CD8-positive, alpha-beta T cell (primary cell): ENCODE measurements at regions of chr11 and their contacts with region 1.

Region 1: DNA sequence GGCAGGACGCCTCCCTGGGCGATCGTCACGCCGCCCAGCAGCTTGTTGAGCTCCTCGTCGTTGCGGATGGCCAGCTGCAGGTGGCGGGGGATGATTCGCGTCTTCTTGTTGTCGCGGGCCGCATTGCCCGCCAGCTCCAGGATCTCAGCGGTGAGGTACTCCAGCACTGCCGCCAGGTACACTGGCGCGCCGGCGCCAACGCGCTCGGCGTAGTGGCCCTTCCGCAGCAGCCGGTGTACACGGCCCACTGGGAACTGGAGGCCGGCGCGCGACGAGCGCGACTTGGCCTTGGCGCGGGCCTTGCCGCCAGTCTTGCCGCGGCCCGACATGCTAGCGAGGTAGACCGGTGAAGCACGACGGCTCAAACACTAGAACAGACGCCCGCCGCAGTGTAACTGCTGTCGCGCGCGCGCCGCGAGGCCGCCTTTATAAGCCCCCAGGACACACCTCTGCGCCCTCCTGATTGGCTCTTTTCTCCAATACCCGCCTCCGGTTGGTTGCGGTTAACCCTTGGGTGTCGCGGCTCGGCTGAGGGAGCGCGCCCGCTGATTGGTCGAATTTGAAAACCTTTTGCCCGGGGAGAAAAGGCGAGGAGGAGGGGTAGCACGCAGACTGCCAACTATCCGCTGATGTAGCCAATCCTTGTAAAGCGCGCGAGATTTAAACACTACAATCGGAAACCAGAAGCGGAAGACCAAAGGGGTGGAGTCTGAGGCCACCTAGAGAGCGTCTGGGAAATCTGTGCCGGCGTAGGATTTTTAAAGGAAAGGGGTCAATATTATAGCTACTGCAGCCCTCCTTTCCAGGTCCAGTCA is 6.4 kb downstream of the DPAGT1 start:
- DNase-seq: peak; percentile 98 to 100 (median 99)
- ATAC-seq: peak; percentile 86
- H3K4me3 ChIP-seq: peak overlapping the region; percentile 78 to 88
- H3K4me3 Mint-ChIP-seq: peak overlapping the region; percentile 93
- H3K27ac ChIP-seq: peak overlapping the region; percentile 75 to 78
- H3K27ac Mint-ChIP-seq: peak overlapping the region; percentile 91
- H3K4me1 ChIP-seq: peaks cover 23% of the 10 kb centered on the region
- H3K4me1 Mint-ChIP-seq: peaks cover 34% of the 10 kb centered on the region
- H3K27me3 ChIP-seq: no peaks in the 10 kb centered on the region
- H3K27me3 Mint-ChIP-seq: no peaks in the 10 kb centered on the region
- CTCF ChIP-seq: no peak

Region 2: DNA sequence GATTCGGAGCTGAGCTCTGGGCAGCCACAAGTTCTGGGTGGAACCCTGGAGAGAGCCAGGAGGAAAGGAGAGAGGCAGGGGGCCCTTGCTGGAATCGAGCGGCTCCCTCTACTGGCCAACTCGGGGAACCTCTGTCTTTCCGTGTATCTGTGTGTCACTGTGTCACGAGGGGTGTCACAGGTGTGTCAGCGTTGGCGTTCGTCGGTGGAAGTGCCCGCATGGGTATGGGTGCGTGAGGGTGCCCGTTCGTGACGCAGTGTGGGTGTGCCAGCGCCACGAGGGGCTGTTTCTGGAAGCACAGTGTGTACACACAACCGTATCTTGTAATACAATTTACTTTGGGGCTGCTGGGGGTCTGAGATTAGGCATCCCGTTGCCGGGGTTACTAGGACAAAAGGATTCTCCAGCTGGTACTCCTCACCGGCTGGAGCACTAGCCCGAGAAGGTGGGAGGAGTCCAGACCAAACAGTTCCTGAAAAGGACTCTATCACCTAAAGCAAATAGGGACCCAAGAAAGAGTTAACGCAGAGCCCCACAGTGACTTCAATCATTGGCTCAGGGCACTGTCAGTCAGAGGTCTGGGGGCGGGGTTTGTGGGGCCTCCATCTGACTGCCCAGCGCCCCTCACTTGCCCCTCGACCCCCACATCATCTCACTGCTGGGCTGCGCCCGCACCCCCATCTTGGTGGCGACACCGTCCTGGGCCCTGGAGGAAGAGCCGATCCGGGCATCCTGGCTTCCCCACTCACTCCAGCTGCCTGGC is 167.0 kb before region 1 on chr11:
- CTCF ChIA-PET with region 1: interaction called, 3 read pairs
- POLR2A ChIA-PET with region 1: no interaction called
- intact Hi-C with region 1: loop called in 1 of 2 experiments (anchors 2 kb)
- DNase-seq: peak; percentile 87 to 100 (median 94)
- ATAC-seq: peak; percentile 58
- H3K4me3 ChIP-seq: peak overlapping the region; percentile 74 to 85
- H3K4me3 Mint-ChIP-seq: peak overlapping the region; percentile 96
- H3K27ac ChIP-seq: peak overlapping the region; percentile 88 to 97
- H3K27ac Mint-ChIP-seq: peak overlapping the region; percentile 98
- H3K4me1 ChIP-seq: peaks cover 29% of the 10 kb centered on the region
- H3K4me1 Mint-ChIP-seq: peaks cover 44% of the 10 kb centered on the region
- H3K27me3 ChIP-seq: no peaks in the 10 kb centered on the region
- H3K27me3 Mint-ChIP-seq: no peaks in the 10 kb centered on the region
- CTCF ChIP-seq: peak; percentile 79

Region 3: DNA sequence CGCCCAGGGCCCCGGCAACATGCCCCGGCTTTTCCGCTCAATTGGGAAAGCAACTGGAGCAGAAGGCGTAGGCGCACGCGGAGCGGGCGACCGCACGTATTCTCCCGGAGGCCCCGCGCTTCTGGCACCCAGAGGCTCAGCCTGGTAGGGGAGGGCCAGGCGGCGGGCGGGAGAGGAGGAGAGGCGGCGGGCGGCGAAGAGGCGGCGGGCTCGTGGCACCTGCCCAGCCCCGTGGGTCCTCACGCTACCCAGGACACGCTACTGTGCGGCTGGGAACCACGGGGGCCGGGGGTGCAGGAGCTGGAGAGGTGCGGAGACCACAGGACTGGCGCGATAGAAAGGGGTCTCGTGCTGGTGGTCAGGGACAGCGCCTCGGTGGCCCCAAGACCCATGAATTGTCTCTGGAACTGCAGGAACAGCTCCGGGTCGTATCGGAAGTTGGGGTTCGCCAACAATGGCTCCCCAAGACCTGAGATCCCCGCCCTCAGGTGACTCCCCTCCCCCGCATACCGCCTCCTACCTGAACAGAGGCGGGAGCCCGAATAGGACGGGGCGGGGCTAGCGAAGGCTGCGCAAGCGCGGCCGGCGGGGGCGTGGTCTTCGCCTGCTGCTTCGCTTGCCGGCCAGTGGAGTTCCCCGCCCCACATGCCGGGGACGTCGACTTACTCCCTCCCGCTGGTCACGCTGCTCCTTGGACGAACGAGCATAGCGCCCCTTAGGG is 64.8 kb before region 1 on chr11 and contains the start of gene SLC37A4:
- CTCF ChIA-PET with region 1: no interaction called
- POLR2A ChIA-PET with region 1: no interaction called
- intact Hi-C with region 1: loop called in 1 of 2 experiments (anchors 2 kb)
- DNase-seq: peak; percentile 97 to 100 (median 99)
- ATAC-seq: peak; percentile 93
- H3K4me3 ChIP-seq: peak within 1 kb of the TSS; percentile 94 to 99
- H3K4me3 Mint-ChIP-seq: peak within 1 kb of the TSS; percentile 89
- H3K27ac ChIP-seq: peak within 1 kb of the TSS; percentile 65 to 71
- H3K27ac Mint-ChIP-seq: peak within 1 kb of the TSS; percentile 88
- H3K4me1 ChIP-seq: peaks cover 13% of the 10 kb centered on the region
- H3K4me1 Mint-ChIP-seq: peaks cover 18% of the 10 kb centered on the region
- H3K27me3 ChIP-seq: no peaks in the 10 kb centered on the region
- H3K27me3 Mint-ChIP-seq: no peaks in the 10 kb centered on the region
- CTCF ChIP-seq: peak; percentile 34
- total RNA-seq, gene SLC37A4: 4.0 to 4.6 TPM

Region 4: GRCh38 chr11:119084663-119085436 is 10.4 kb before region 1 on chr11 and contains the start of gene HMBS:
- CTCF ChIA-PET with region 1: interaction called, 6 read pairs
- POLR2A ChIA-PET with region 1: interaction called, 27 read pairs
- intact Hi-C with region 1: loop called in 1 of 2 experiments (anchors 1 kb)
- DNase-seq: peak; percentile 78 to 97 (median 92)
- ATAC-seq: peak; percentile 93
- H3K4me3 ChIP-seq: peak within 1 kb of the TSS; percentile 92
- H3K4me3 Mint-ChIP-seq: peak within 1 kb of the TSS; percentile 91
- H3K27ac ChIP-seq: peak within 1 kb of the TSS; percentile 75 to 86
- H3K27ac Mint-ChIP-seq: peak within 1 kb of the TSS; percentile 93
- H3K4me1 ChIP-seq: peaks cover 18% of the 10 kb centered on the region
- H3K4me1 Mint-ChIP-seq: peaks cover 20% of the 10 kb centered on the region
- H3K27me3 ChIP-seq: no peaks in the 10 kb centered on the region
- H3K27me3 Mint-ChIP-seq: no peaks in the 10 kb centered on the region
- CTCF ChIP-seq: no peak
- total RNA-seq, gene HMBS: 5.4 to 6.4 TPM

Region 5: GRCh38 chr11:119168471-119169281 is 73.4 kb after region 1 on chr11 and contains the start of gene NLRX1:
- CTCF ChIA-PET with region 1: interaction called, 3 read pairs
- POLR2A ChIA-PET with region 1: no interaction called
- intact Hi-C with region 1: loop called in 1 of 2 experiments (anchors 1 kb)
- DNase-seq: peak; percentile 70 to 90 (median 81)
- ATAC-seq: peak; percentile 99
- H3K4me3 ChIP-seq: peak within 1 kb of the TSS; percentile 61 to 70
- H3K4me3 Mint-ChIP-seq: peak within 1 kb of the TSS; percentile 87
- H3K27ac ChIP-seq: peak within 1 kb of the TSS; percentile 60 to 69
- H3K27ac Mint-ChIP-seq: peak within 1 kb of the TSS; percentile 81
- H3K4me1 ChIP-seq: peaks cover 6% of the 10 kb centered on the region
- H3K4me1 Mint-ChIP-seq: no peaks in the 10 kb centered on the region
- H3K27me3 ChIP-seq: no peaks in the 10 kb centered on the region
- H3K27me3 Mint-ChIP-seq: no peaks in the 10 kb centered on the region
- CTCF ChIP-seq: peak; percentile 80
- total RNA-seq, gene NLRX1: 5.1 TPM

Region 6: GRCh38 chr11:119222308-119222707 is 127.0 kb after region 1 on chr11:
- CTCF ChIA-PET with region 1: no interaction called
- POLR2A ChIA-PET with region 1: no interaction called
- intact Hi-C with region 1: no loop called
- DNase-seq: no peak
- ATAC-seq: no peak
- H3K4me3 ChIP-seq: no peak overlapping the region
- H3K4me3 Mint-ChIP-seq: no peak overlapping the region
- H3K27ac ChIP-seq: no peak overlapping the region
- H3K27ac Mint-ChIP-seq: peak overlapping the region; percentile 78
- H3K4me1 ChIP-seq: peaks cover 13% of the 10 kb centered on the region
- H3K4me1 Mint-ChIP-seq: peaks cover 59% of the 10 kb centered on the region
- H3K27me3 ChIP-seq: no peaks in the 10 kb centered on the region
- H3K27me3 Mint-ChIP-seq: no peaks in the 10 kb centered on the region
- CTCF ChIP-seq: no peak

Region 7: GRCh38 chr11:119323538-119324033 is 228.3 kb after region 1 on chr11:
- CTCF ChIA-PET with region 1: interaction called, 5 read pairs
- POLR2A ChIA-PET with region 1: interaction called, 5 read pairs
- intact Hi-C with region 1: loop called in 1 of 2 experiments (anchors 5 kb)
- DNase-seq: peak; percentile 65 to 88 (median 76)
- ATAC-seq: peak; percentile 18
- H3K4me3 ChIP-seq: no peak overlapping the region
- H3K4me3 Mint-ChIP-seq: no peak overlapping the region
- H3K27ac ChIP-seq: no peak overlapping the region
- H3K27ac Mint-ChIP-seq: no peak overlapping the region
- H3K4me1 ChIP-seq: peaks cover 11% of the 10 kb centered on the region
- H3K4me1 Mint-ChIP-seq: peaks cover 26% of the 10 kb centered on the region
- H3K27me3 ChIP-seq: peaks cover 0 to 2% of the 10 kb centered on the region in 2 experiments
- H3K27me3 Mint-ChIP-seq: peaks cover 1% of the 10 kb centered on the region
- CTCF ChIP-seq: peak; percentile 77